ENCODE measurements at regions of chr12 and their contacts with region 1.

Region 1: DNA sequence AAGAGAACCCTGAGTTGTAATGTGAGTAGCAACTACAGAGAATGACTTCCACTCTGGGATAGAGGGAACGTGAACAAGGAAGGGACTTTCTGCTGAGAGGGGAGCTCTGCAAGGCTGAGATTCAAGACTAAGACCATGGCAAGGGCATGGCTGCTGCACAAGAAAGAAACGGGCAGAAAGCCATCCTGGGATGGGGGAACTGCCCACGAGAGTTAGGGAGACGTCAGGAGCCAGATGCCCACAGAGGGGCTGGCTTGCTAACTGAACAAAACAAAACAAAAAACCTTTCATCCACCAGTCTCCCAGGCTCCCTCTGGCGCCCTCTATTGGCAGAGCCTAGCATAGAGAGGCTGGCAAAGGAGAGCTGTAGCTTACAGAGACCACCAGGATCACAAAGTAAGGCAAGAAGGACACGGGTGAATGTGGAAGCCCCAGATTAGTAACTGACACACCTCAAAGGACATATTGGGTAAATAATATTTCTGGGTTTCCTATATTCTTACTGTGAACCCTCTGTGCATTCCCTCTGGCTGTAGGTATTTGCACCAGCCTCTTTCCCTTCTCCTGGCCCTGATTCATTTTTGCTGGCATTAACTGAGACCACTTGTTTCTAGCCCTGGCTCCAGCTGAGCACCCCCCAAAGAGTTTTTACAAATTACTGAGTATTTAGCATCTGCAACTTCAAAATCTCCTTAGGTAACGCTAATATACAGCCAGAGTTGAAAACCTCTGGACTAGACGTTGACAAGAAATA is 338.3 kb downstream of the EMP1 start:
- DNase-seq: peak; percentile 13
- H3K27ac ChIP-seq: no peak overlapping the region
- CTCF ChIP-seq: peak; percentile 55

Region 2: GRCh38 chr12:13144266-13144828 is 390.5 kb before region 1 on chr12:
- CTCF ChIA-PET with region 1: no interaction called
- POLR2A ChIA-PET with region 1: no interaction called
- DNase-seq: no peak
- H3K27ac ChIP-seq: no peak overlapping the region
- CTCF ChIP-seq: no peak

Region 3: DNA sequence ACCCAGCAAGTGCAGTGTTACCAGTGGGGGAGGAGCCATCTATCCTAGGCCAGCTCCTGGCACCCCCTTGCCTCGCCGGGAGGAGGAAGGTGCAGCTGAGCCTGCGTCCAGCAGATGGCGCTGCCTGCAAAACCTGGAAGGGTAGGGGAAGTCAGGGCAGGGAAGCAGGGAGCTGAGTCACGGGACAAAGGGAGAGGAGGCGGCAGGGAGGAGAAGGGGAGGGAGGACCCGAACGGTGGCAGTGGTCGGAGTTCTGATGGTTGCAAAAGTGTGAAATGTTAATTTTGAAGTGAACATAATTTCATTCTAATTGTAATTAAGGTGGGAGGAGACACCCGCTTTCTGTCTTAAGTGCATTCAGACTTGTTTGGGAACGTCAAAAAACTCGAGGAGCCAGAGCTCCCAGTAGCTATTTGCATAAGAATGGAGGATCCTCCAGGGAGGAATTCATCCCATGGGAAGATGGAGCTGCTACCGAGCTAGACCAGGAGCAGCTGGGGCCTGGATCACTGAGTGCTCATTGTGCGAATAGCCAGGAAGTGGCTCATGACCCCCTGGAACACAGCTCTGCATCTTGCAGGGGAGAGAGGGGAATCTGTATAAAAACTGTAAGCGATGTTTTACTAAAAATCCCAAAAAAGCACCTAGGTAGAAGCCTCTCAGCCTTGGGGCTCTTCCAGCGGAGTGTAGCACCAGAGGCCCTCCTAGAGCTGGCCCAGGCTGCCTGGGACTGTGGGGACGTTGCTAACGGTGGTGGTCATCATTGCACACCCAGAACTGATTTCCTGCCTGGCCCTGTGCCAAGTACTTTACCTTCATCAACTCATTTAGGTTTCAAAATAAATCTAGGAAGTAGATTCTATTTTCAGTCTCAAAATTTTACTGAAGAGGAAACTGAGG is 278.8 kb before region 1 on chr12:
- CTCF ChIA-PET with region 1: interaction called, 11 read pairs
- POLR2A ChIA-PET with region 1: no interaction called
- DNase-seq: peak; percentile 94
- H3K27ac ChIP-seq: no peak overlapping the region
- CTCF ChIP-seq: peak; percentile 86

Region 4: GRCh38 chr12:13278249-13278787 is 256.5 kb before region 1 on chr12:
- CTCF ChIA-PET with region 1: interaction called, 11 read pairs
- POLR2A ChIA-PET with region 1: no interaction called
- DNase-seq: peak; percentile 72
- H3K27ac ChIP-seq: no peak overlapping the region
- CTCF ChIP-seq: peak; percentile 58